ENCODE measurements at regions of chr5 and their contacts with region 1.

Region 1: DNA sequence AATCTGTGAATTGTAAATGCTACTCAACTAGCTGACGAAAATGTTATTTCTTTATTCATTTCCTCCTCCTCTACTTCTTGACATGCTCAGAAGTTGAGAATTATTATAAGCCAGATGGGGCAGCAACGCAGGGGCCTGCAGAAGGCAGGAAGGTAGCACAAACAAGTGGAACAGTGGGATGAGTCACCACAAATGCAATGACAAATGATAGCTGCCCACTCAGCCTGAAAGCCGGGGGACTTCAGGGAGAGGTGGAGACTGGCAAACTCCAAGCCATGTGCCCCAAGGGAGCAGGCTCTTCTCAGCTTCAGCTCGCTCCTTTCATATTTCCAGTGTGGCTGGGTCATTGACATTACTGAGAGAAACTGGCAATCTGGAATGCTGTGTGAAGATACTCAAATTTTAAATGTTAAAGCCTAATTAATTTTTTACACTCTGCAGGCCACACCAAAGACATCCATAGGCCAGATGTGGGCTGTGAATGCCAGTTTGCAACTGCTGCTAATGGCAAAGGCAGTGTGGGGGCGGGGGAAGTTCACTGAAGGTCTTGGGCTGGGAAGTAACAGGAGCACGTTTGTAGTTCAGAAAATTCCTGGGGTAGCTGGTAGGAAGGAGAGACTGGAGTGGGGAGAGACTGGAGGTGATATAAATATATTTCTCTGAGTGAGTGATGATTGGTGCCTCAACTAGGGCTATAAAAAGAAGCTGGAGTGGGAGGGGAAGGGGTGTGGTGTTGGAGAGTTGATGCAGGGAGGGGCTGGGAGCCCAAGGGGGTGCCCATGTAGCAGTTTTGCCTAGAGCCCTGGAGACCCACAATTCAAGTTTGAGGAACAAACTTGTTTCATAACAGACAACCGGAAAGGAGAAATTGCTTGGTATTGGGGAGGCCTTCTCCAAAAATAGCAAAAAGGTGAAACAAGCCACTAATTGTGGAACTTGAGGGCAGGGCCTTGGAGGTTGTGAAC is 20.8 kb upstream of the ADRB2 start:
- DNase-seq: peak; percentile 61
- H3K4me3 Mint-ChIP-seq: no peak overlapping the region
- H3K27ac Mint-ChIP-seq: no peak overlapping the region
- H3K4me1 Mint-ChIP-seq: peaks cover 58% of the 10 kb centered on the region
- H3K27me3 Mint-ChIP-seq: peaks cover 15% of the 10 kb centered on the region

Region 2: DNA sequence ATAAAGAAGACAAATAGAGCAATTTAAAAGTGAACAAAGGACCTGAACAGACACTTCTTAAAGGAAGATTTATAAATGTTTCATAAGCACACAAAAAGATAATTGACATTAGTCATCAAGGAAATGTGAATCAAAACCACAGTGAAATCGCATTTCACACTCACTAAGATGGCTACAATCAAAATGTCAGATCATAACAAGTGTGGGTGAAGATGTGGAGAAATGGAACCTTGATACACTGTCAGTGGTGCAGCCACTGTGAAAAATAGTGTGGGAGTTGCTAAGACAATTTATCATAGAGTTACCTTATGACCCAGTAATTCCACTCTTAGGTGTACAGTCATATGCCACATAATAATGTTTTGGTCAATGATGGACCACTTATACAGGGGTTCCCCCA is 96.8 kb before region 1 on chr5:
- CTCF ChIA-PET with region 1: no interaction called
- intact Hi-C with region 1: loop called (anchors 2 kb)
- DNase-seq: peak; percentile 33
- H3K4me3 Mint-ChIP-seq: no peak overlapping the region
- H3K27ac Mint-ChIP-seq: no peak overlapping the region
- H3K4me1 Mint-ChIP-seq: peaks cover 13% of the 10 kb centered on the region
- H3K27me3 Mint-ChIP-seq: peaks cover 19% of the 10 kb centered on the region

Region 3: DNA sequence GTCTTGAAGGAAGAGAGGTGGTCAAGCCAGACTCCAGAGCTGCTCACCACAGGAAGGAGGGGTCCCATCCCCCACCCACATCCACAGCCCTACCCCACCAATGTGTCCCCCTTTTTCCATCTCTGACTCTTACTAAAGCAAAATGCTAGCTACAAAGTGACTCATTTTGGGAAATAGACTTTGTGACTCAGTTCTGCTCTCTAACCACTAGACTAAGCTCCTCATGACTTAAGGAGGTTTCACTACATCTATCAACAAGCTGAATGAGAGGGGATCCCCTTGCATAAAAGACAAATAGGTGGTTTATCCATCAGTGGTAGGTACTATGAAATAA is 14.3 kb before region 1 on chr5:
- CTCF ChIA-PET with region 1: interaction called, 6 read pairs
- intact Hi-C with region 1: loop called (anchors 1 kb)
- DNase-seq: peak; percentile 60
- H3K4me3 Mint-ChIP-seq: no peak overlapping the region
- H3K27ac Mint-ChIP-seq: no peak overlapping the region
- H3K4me1 Mint-ChIP-seq: peaks cover 18% of the 10 kb centered on the region
- H3K27me3 Mint-ChIP-seq: peaks cover 34% of the 10 kb centered on the region

Region 4: GRCh38 chr5:148826053-148826738 is 20.6 kb after region 1 on chr5 and contains the start of gene ADRB2:
- CTCF ChIA-PET with region 1: interaction called, 18 read pairs
- intact Hi-C with region 1: loop called (anchors 1 kb)
- DNase-seq: peak; percentile 90
- H3K4me3 Mint-ChIP-seq: peak within 1 kb of the TSS; percentile 78
- H3K27ac Mint-ChIP-seq: peak within 1 kb of the TSS; percentile 10
- H3K4me1 Mint-ChIP-seq: peaks cover 15% of the 10 kb centered on the region
- H3K27me3 Mint-ChIP-seq: peaks cover 23% of the 10 kb centered on the region
- total RNA-seq, gene ADRB2: 0.21 to 0.32 TPM

Region 5: DNA sequence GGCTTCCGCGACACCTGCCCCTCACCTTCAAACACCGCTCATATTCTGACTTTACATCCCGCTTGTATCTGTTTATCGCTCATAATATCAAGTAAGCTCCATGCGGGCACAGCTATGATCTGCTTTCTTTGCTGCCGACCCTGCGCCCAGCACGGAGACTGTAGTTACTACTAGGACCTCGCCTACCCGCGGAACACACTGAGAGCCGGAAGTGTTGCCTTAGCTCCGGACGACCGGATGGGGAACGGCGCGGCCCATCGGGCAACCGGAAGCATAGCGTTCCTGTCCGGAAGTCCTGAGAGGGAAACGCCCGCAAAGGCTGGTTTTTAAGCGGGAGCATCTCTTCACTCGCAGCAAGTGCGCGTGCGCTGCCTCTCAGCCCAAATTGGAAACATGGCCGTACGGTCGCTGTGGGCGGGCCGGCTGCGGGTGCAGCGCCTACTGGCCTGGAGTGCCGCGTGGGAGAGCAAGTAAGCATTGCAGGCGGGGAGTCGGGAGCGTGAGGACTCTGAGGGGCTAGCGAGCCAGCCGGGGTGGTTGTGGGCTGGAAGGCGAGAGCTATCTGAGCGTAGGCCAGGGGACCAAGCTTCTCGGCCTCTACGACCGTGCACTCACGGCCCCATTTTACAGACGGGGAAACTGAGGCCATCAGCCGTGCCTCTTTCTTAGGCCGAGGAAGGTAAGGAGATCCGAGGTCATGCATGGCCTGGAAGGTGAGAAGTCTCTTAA is 539.7 kb after region 1 on chr5 and contains the start of gene GRPEL2:
- CTCF ChIA-PET with region 1: no interaction called
- intact Hi-C with region 1: loop called (anchors 2 kb)
- DNase-seq: peak; percentile 97
- H3K4me3 Mint-ChIP-seq: peak within 1 kb of the TSS; percentile 91
- H3K27ac Mint-ChIP-seq: peak within 1 kb of the TSS; percentile 95
- H3K4me1 Mint-ChIP-seq: peaks cover 52% of the 10 kb centered on the region
- H3K27me3 Mint-ChIP-seq: no peaks in the 10 kb centered on the region
- total RNA-seq, gene GRPEL2: 44.7 to 49.6 TPM